ENCODE measurements at regions of chr5 and their contacts with region 1.

Region 1: DNA sequence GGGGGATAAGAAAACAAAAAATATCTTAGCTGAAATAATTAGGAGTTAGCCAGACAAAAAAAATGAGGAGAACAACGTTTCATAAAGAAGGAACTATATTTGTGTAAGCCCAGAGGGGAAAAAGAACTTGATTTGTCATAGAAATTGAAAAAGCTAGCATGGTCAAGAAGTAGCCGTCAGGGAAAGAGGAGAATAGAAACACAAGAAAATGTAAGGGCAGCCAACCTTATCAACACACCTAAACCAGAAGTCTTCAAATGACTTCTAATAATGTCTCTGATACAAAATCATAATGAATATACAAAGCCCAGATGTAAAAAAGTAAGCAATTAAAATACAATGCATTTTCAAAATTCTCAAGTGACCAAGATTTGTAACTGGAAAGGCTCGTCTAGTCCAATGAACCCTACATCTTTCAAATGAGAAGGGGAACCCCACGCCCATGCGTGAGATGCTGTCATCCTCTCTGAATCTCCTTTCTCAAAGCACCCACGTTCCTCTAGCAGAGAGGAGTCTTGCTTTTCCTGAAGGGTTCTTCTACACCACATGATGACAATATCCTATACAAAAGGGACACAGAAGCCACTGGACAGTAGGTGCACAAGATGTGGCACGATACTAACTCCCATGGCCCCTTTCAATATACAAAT is 103.7 kb downstream of the ARL15 start:
- DNase-seq: no peak
- ATAC-seq: no peak
- H3K4me3 ChIP-seq: no peak overlapping the region
- H3K27ac ChIP-seq: no peak overlapping the region
- H3K4me1 ChIP-seq: peaks cover 0 to 43% (median under 1%) of the 10 kb centered on the region in 12 donors
- H3K27me3 ChIP-seq: no peaks in the 10 kb centered on the region
- CTCF ChIP-seq: no peak
- POLR2A ChIP-seq: no peak

Region 2: DNA sequence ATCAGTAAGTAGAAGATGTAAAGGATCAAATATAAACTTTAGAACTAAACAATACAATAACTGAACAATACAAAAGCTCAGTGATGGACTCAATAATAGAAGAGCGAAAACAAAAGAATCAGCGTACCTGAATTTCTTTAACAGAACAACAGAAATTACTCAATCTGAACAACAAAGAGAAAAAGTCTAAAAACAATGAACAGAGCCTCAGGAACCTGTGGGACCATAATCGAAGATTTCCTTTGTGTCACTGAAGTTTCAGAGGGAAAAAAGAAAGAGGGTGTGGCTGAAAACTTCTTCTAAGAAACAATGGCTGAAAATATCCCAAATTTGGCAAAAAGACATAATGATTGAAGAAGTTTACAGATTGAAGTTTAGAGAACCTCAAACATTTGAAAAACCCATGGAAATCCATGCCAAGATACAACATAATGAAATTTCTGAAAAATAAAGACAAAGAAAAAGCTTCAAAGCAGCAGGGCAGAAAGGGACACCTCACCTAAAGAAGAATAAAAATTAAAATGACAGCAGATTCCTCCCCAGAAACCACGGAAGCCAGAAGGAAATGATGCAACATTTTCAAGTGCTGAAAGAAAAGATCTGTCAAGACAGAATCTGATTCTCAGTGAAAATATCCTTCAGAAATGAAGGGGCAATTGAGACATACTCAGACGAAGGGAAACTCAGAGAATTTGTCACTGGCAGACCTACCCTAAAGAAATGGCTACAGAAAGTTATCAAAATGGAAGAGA is 185.1 kb before region 1 on chr5:
- intact Hi-C with region 1: loop called in 1 of 10 experiments (anchors 10 kb)
- DNase-seq: no peak
- ATAC-seq: no peak
- H3K4me3 ChIP-seq: no peak overlapping the region
- H3K27ac ChIP-seq: no peak overlapping the region
- H3K4me1 ChIP-seq: peaks cover 0 to 9% (median 0%) of the 10 kb centered on the region in 12 donors
- H3K27me3 ChIP-seq: no peaks in the 10 kb centered on the region
- CTCF ChIP-seq: no peak
- POLR2A ChIP-seq: no peak

Region 3: DNA sequence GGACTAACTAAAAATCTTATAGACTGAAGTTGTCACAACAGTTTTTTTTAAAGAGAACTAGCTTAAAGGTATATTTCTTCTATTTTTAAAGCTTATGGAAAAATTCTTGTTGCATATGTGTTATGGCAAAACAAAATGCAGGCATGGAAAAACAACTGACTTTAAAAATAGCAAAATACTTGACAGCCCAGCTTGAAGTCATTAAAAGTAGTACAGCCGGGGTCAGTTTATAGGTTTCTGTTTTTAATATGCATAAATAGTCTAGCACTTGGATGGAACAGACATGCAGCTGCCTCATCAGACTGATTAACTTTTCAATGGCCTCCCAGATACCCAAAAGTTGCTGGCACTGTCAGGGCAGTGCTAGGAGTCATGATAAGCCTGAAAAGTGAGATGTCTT is 126.0 kb after region 1 on chr5:
- intact Hi-C with region 1: no loop called
- DNase-seq: no peak
- ATAC-seq: no peak
- H3K4me3 ChIP-seq: no peak overlapping the region
- H3K27ac ChIP-seq: no peak overlapping the region
- H3K4me1 ChIP-seq: peaks cover 0 to 4% (median 0%) of the 10 kb centered on the region in 12 donors
- H3K27me3 ChIP-seq: no peaks in the 10 kb centered on the region
- CTCF ChIP-seq: no peak
- POLR2A ChIP-seq: no peak

Region 4: GRCh38 chr5:54457094-54457862 is 250.6 kb after region 1 on chr5:
- intact Hi-C with region 1: no loop called
- DNase-seq: peak in 4 of 5 donors; percentile 50 to 57 (median 53)
- ATAC-seq: peak; percentile 77 to 82 (median 79)
- H3K4me3 ChIP-seq: peak overlapping the region; percentile 9 to 68 (median 50)
- H3K27ac ChIP-seq: peak overlapping the region; percentile 73 to 95 (median 88)
- H3K4me1 ChIP-seq: peaks cover 0 to 24% (median 3%) of the 10 kb centered on the region in 12 donors
- H3K27me3 ChIP-seq: no peaks in the 10 kb centered on the region
- CTCF ChIP-seq: no peak
- POLR2A ChIP-seq: no peak